ENCODE measurements at regions of chr12 and their contacts with region 1.

Region 1: GRCh38 chr12:55738123-55739024 is 4.5 kb upstream of the GDF11 start:
- DNase-seq: peak; percentile 51 to 89 (median 81)
- ATAC-seq: peak; percentile 75
- H3K4me3 ChIP-seq: peak overlapping the region; percentile 73 to 80
- H3K4me3 Mint-ChIP-seq: peak overlapping the region; percentile 90
- H3K27ac ChIP-seq: peak overlapping the region; percentile 73 to 87
- H3K27ac Mint-ChIP-seq: peak overlapping the region; percentile 93
- H3K4me1 ChIP-seq: peaks cover 22% of the 10 kb centered on the region
- H3K4me1 Mint-ChIP-seq: peaks cover 24% of the 10 kb centered on the region
- H3K27me3 ChIP-seq: no peaks in the 10 kb centered on the region
- H3K27me3 Mint-ChIP-seq: no peaks in the 10 kb centered on the region
- CTCF ChIP-seq: peak; percentile 90

Region 2: GRCh38 chr12:55797068-55797467 is 58.7 kb after region 1 on chr12:
- CTCF ChIA-PET with region 1: interaction called, 51 read pairs
- POLR2A ChIA-PET with region 1: no interaction called
- intact Hi-C with region 1: loop called (anchors 1 to 5 kb)
- DNase-seq: peak in 2 of 9 experiments; percentile 40 to 48
- ATAC-seq: peak; percentile 38
- H3K4me3 ChIP-seq: no peak overlapping the region
- H3K4me3 Mint-ChIP-seq: no peak overlapping the region
- H3K27ac ChIP-seq: no peak overlapping the region
- H3K27ac Mint-ChIP-seq: no peak overlapping the region
- H3K4me1 ChIP-seq: no peaks in the 10 kb centered on the region
- H3K4me1 Mint-ChIP-seq: peaks cover 2% of the 10 kb centered on the region
- H3K27me3 ChIP-seq: no peaks in the 10 kb centered on the region
- H3K27me3 Mint-ChIP-seq: no peaks in the 10 kb centered on the region
- CTCF ChIP-seq: no peak

Region 3: GRCh38 chr12:55931780-55932550 is 193.6 kb after region 1 on chr12:
- CTCF ChIA-PET with region 1: interaction called, 19 read pairs
- POLR2A ChIA-PET with region 1: interaction called, 8 read pairs
- intact Hi-C with region 1: loop called in 1 of 2 experiments (anchors 1 kb)
- DNase-seq: peak in 7 of 9 experiments; percentile 18 to 69 (median 46)
- ATAC-seq: no peak
- H3K4me3 ChIP-seq: peak overlapping the region; percentile 82 to 91
- H3K4me3 Mint-ChIP-seq: peak overlapping the region; percentile 99
- H3K27ac ChIP-seq: peak overlapping the region; percentile 65 to 90
- H3K27ac Mint-ChIP-seq: peak overlapping the region; percentile 95
- H3K4me1 ChIP-seq: peaks cover 60% of the 10 kb centered on the region
- H3K4me1 Mint-ChIP-seq: peaks cover 63% of the 10 kb centered on the region
- H3K27me3 ChIP-seq: no peaks in the 10 kb centered on the region
- H3K27me3 Mint-ChIP-seq: no peaks in the 10 kb centered on the region
- CTCF ChIP-seq: no peak

Region 4: GRCh38 chr12:55996715-55997534 is 258.6 kb after region 1 on chr12 and contains the start of gene SUOX:
- CTCF ChIA-PET with region 1: interaction called, 27 read pairs
- POLR2A ChIA-PET with region 1: no interaction called
- intact Hi-C with region 1: no loop called
- DNase-seq: peak in 6 of 9 experiments; percentile 7 to 52 (median 26)
- ATAC-seq: no peak
- H3K4me3 ChIP-seq: peak within 1 kb of the TSS; percentile 14 to 34
- H3K4me3 Mint-ChIP-seq: peak within 1 kb of the TSS; percentile 66
- H3K27ac ChIP-seq: no peak within 1 kb of the TSS
- H3K27ac Mint-ChIP-seq: no peak within 1 kb of the TSS
- H3K4me1 ChIP-seq: peaks cover 14% of the 10 kb centered on the region
- H3K4me1 Mint-ChIP-seq: peaks cover 23% of the 10 kb centered on the region
- H3K27me3 ChIP-seq: peaks cover 0 to 12% of the 10 kb centered on the region in 2 experiments
- H3K27me3 Mint-ChIP-seq: peaks cover 6% of the 10 kb centered on the region
- CTCF ChIP-seq: no peak
- total RNA-seq, gene SUOX: 0.72 to 1.2 TPM

Region 5: DNA sequence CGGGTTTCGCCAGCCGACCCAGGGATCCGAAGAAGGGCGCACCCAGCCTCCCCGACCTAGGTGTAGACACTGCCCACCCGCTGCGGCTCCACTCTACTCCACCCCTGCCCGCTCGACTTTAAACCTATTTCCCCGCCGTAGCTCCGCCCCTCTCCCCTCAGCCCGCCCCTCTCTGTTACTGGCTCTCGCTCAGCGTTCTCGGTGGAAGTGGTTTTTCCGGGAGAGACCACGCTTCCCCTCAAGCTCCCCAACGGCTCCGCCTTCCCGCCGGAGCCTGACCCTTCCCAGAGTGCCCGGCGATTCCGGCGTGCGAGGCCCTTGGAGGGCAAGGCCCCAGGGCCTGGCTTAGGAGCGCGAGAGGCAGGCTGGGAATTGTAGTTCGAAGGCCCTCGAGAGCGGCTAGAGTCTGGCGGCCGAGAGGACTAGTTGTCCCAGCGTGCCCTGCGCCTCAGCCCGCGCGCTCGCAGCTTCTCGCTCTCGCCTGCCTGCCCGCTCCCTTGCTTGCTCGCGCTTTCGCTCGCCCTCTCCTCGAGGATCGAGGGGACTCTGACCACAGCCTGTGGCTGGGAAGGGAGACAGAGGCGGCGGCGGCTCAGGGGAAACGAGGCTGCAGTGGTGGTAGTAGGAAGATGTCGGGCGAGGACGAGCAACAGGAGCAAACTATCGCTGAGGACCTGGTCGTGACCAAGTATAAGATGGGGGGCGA is 365.9 kb after region 1 on chr12 and contains the start of gene PA2G4:
- CTCF ChIA-PET with region 1: interaction called, 7 read pairs
- POLR2A ChIA-PET with region 1: interaction called, 3 read pairs
- intact Hi-C with region 1: loop called in 1 of 2 experiments (anchors 5 kb)
- DNase-seq: peak; percentile 91 to 99 (median 96)
- ATAC-seq: peak; percentile 88
- H3K4me3 ChIP-seq: peak within 1 kb of the TSS; percentile 90
- H3K4me3 Mint-ChIP-seq: peak within 1 kb of the TSS; percentile 99
- H3K27ac ChIP-seq: peak within 1 kb of the TSS; percentile 53 to 70
- H3K27ac Mint-ChIP-seq: peak within 1 kb of the TSS; percentile 98
- H3K4me1 ChIP-seq: peaks cover 37% of the 10 kb centered on the region
- H3K4me1 Mint-ChIP-seq: peaks cover 66% of the 10 kb centered on the region
- H3K27me3 ChIP-seq: no peaks in the 10 kb centered on the region
- H3K27me3 Mint-ChIP-seq: no peaks in the 10 kb centered on the region
- CTCF ChIP-seq: no peak
- total RNA-seq, gene PA2G4: 61.6 to 62.4 TPM

Region 6: DNA sequence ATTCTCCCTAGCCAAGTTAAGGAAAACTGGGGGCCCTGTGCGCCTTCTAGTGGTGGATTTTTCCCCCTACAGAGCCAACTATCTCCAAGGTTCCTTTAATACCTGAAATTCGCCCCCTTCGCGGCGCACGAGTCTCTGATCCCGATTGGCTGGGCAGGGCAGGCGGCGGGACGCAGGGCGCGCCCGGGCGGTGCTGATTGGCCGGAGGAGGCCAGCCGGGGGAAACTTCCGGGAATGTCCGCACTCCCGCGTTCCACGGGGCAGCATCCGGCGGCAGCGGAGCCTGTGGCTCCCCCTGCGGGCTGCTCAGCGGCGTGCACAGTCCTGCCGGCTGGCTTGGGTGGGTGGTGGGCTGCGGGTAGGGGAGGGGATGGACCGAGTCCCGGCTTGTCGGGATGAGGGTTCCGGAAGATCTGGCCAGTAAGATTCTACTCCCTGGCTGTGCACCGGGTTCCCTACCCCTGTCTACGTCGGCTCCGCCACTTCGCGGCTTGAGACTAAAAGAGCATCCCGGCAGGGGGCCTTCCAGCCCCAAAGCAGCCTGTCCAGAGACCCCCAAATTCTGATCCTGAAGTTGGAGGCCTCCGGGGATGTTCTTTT is 485.8 kb after region 1 on chr12 and contains the start of gene NABP2:
- CTCF ChIA-PET with region 1: interaction called, 5 read pairs
- POLR2A ChIA-PET with region 1: no interaction called
- intact Hi-C with region 1: loop called (anchors 1 to 10 kb)
- DNase-seq: peak; percentile 74 to 97 (median 91)
- ATAC-seq: peak; percentile 64
- H3K4me3 ChIP-seq: peak within 1 kb of the TSS; percentile 65 to 68
- H3K4me3 Mint-ChIP-seq: peak within 1 kb of the TSS; percentile 95
- H3K27ac ChIP-seq: peak within 1 kb of the TSS; percentile 53 to 85
- H3K27ac Mint-ChIP-seq: peak within 1 kb of the TSS; percentile 99
- H3K4me1 ChIP-seq: peaks cover 29% of the 10 kb centered on the region
- H3K4me1 Mint-ChIP-seq: peaks cover 44% of the 10 kb centered on the region
- H3K27me3 ChIP-seq: no peaks in the 10 kb centered on the region
- H3K27me3 Mint-ChIP-seq: no peaks in the 10 kb centered on the region
- CTCF ChIP-seq: peak; percentile 84
- total RNA-seq, gene NABP2: 6.8 to 7.4 TPM

Region 7: DNA sequence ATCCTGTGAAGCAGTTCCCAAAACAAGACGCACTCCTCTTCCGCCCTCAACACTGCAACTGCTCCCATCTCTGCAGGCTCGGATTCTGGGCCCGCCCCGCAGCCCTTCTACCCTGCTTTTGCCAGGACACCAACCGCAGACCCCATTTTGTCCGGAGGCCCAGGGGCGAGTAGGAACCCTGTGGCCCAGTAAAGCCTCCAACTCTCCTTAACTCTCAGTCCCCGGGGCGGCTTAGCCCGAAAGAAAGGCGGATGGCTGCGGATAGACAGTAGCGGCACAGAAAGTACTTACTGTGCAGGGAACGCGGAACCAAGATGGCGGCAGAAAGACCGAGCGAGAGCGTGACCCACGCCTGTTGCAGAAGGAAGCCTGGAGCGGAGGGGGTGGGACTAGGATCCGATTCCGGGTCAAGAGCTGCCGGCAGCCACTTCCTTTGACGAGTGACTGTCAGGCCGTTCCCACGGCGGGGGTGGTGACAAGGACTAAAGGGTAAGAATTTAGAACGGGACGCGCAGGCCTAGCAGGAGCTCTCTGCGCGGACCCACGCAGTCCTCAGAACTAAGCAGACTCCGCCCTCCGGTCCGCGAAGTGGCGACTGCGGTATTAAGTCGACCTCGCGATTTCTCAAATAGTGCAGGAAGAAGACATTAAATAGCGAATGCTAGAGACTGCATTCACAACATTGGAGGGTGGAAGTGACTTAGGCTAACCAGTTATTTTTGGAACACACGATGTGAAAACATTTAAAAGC is 986.8 kb after region 1 on chr12 and contains the start of gene NACA:
- CTCF ChIA-PET with region 1: no interaction called
- POLR2A ChIA-PET with region 1: no interaction called
- intact Hi-C with region 1: loop called in 1 of 2 experiments (anchors 5 kb)
- DNase-seq: peak; percentile 94 to 99 (median 97)
- ATAC-seq: peak; percentile 95
- H3K4me3 ChIP-seq: peak within 1 kb of the TSS; percentile 70 to 88
- H3K4me3 Mint-ChIP-seq: peak within 1 kb of the TSS; percentile 99
- H3K27ac ChIP-seq: peak within 1 kb of the TSS; percentile 75 to 80
- H3K27ac Mint-ChIP-seq: peak within 1 kb of the TSS; percentile 96
- H3K4me1 ChIP-seq: peaks cover 45% of the 10 kb centered on the region
- H3K4me1 Mint-ChIP-seq: peaks cover 52% of the 10 kb centered on the region
- H3K27me3 ChIP-seq: no peaks in the 10 kb centered on the region
- H3K27me3 Mint-ChIP-seq: no peaks in the 10 kb centered on the region
- CTCF ChIP-seq: no peak
- total RNA-seq, gene NACA: 1,373 to 1,407 TPM